Panc1 (cell line): ENCODE measurements at regions of chr17 and their contacts with region 1.

Region 1: GRCh38 chr17:50094753-50095619 is at the start of gene PDK2:
- DNase-seq: no peak
- ATAC-seq: peak; percentile 89
- H3K4me3 ChIP-seq: peak within 1 kb of the TSS; percentile 73 to 75
- H3K27ac ChIP-seq: peak within 1 kb of the TSS; percentile 86
- H3K4me1 ChIP-seq: peaks cover 32% of the 10 kb centered on the region
- H3K27me3 ChIP-seq: no peaks in the 10 kb centered on the region
- CTCF ChIP-seq: no peak
- total RNA-seq, gene PDK2: 46.0 TPM

Region 2: GRCh38 chr17:49748791-49749190 is 346.2 kb before region 1 on chr17:
- CTCF ChIA-PET with region 1: no interaction called
- POLR2A ChIA-PET with region 1: no interaction called
- in situ Hi-C with region 1: no loop called
- intact Hi-C with region 1: no loop called
- DNase-seq: no peak
- ATAC-seq: no peak
- H3K4me3 ChIP-seq: no peak overlapping the region
- H3K27ac ChIP-seq: no peak overlapping the region
- H3K4me1 ChIP-seq: no peaks in the 10 kb centered on the region
- H3K27me3 ChIP-seq: no peaks in the 10 kb centered on the region
- CTCF ChIP-seq: no peak

Region 3: DNA sequence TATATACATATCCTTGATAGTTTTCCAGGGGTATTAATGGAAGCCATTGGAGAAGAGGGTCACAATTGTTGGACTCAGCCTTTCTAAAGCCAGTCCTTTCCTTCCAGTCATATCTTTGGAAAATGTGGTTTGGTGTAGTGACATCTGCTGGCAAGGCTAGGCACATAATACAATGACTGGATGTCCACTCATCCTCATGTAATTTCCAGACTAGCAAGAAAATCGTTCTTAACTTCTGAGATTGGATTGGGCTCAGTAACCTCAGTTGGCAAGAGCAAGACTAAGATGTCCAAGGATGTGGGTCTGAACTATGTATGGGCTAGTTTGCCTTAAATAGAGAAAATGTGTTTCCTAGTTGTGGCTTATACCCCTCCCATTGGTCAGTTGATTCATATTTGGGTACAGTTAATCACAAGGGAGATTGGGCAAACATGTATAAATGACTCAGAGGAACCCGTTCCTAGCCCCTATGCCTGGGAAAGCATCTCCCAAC is 315.2 kb before region 1 on chr17:
- CTCF ChIA-PET with region 1: no interaction called
- POLR2A ChIA-PET with region 1: no interaction called
- in situ Hi-C with region 1: no loop called
- intact Hi-C with region 1: no loop called
- DNase-seq: peak; percentile 38
- ATAC-seq: peak; percentile 80
- H3K4me3 ChIP-seq: no peak overlapping the region
- H3K27ac ChIP-seq: no peak overlapping the region
- H3K4me1 ChIP-seq: no peaks in the 10 kb centered on the region
- H3K27me3 ChIP-seq: no peaks in the 10 kb centered on the region; the same call in 1 of the 2 replicates
- CTCF ChIP-seq: peak; percentile 75

Region 4: GRCh38 chr17:49952209-49952911 is 142.6 kb before region 1 on chr17:
- CTCF ChIA-PET with region 1: no interaction called
- POLR2A ChIA-PET with region 1: no interaction called
- in situ Hi-C with region 1: no loop called
- intact Hi-C with region 1: no loop called
- DNase-seq: peak; percentile 48
- ATAC-seq: peak; percentile 95
- H3K4me3 ChIP-seq: no peak overlapping the region
- H3K27ac ChIP-seq: no peak overlapping the region
- H3K4me1 ChIP-seq: peaks cover 4% of the 10 kb centered on the region; the same call in 1 of the 2 replicates
- H3K27me3 ChIP-seq: no peaks in the 10 kb centered on the region; the same call in 1 of the 2 replicates
- CTCF ChIP-seq: peak; percentile 98

Region 5: GRCh38 chr17:50114849-50115357 is 19.9 kb after region 1 on chr17:
- CTCF ChIA-PET with region 1: interaction called, 12 read pairs
- POLR2A ChIA-PET with region 1: no interaction called
- in situ Hi-C with region 1: no loop called
- intact Hi-C with region 1: no loop called
- DNase-seq: no peak
- ATAC-seq: peak; percentile 49
- H3K4me3 ChIP-seq: no peak overlapping the region
- H3K27ac ChIP-seq: no peak overlapping the region
- H3K4me1 ChIP-seq: peaks cover 15% of the 10 kb centered on the region
- H3K27me3 ChIP-seq: no peaks in the 10 kb centered on the region
- CTCF ChIP-seq: peak; percentile 91